Ascending aorta (tissue), 2 donors: ENCODE measurements at regions of chr6 and their contacts with region 1.

Region 1: GRCh38 chr6:161444464-161444863 is 170.6 kb upstream of the AGPAT4 start:
- DNase-seq: no peak
- H3K4me3 ChIP-seq: peak overlapping the region; percentile 24 to 35
- H3K27ac ChIP-seq: no peak overlapping the region
- H3K4me1 ChIP-seq: peaks cover 0 to 4% of the 10 kb centered on the region in 2 donors
- H3K27me3 ChIP-seq: no peaks in the 10 kb centered on the region
- CTCF ChIP-seq: peak in 1 of 3 experiments; percentile 48

Region 2: GRCh38 chr6:161418463-161418945 is 26.0 kb before region 1 on chr6:
- intact Hi-C with region 1: loop called (anchors 1 kb)
- DNase-seq: no peak
- H3K4me3 ChIP-seq: no peak overlapping the region
- H3K27ac ChIP-seq: no peak overlapping the region
- H3K4me1 ChIP-seq: peaks cover 0 to 3% of the 10 kb centered on the region in 2 donors
- H3K27me3 ChIP-seq: no peaks in the 10 kb centered on the region
- CTCF ChIP-seq: peak; percentile 48 to 65 (median 60)

Region 3: GRCh38 chr6:161498359-161498758 is 53.9 kb after region 1 on chr6:
- intact Hi-C with region 1: no loop called
- DNase-seq: no peak
- H3K4me3 ChIP-seq: no peak overlapping the region
- H3K27ac ChIP-seq: no peak overlapping the region
- H3K4me1 ChIP-seq: no peaks in the 10 kb centered on the region
- H3K27me3 ChIP-seq: no peaks in the 10 kb centered on the region
- CTCF ChIP-seq: no peak

Region 4: GRCh38 chr6:162416831-162417537 is 972.5 kb after region 1 on chr6:
- intact Hi-C with region 1: no loop called
- DNase-seq: no peak
- H3K4me3 ChIP-seq: no peak overlapping the region
- H3K27ac ChIP-seq: no peak overlapping the region
- H3K4me1 ChIP-seq: no peaks in the 10 kb centered on the region
- H3K27me3 ChIP-seq: no peaks in the 10 kb centered on the region
- CTCF ChIP-seq: no peak